Mammary epithelial cell (primary cell): ENCODE measurements at regions of chr14 and their contacts with region 1.

Region 1: DNA sequence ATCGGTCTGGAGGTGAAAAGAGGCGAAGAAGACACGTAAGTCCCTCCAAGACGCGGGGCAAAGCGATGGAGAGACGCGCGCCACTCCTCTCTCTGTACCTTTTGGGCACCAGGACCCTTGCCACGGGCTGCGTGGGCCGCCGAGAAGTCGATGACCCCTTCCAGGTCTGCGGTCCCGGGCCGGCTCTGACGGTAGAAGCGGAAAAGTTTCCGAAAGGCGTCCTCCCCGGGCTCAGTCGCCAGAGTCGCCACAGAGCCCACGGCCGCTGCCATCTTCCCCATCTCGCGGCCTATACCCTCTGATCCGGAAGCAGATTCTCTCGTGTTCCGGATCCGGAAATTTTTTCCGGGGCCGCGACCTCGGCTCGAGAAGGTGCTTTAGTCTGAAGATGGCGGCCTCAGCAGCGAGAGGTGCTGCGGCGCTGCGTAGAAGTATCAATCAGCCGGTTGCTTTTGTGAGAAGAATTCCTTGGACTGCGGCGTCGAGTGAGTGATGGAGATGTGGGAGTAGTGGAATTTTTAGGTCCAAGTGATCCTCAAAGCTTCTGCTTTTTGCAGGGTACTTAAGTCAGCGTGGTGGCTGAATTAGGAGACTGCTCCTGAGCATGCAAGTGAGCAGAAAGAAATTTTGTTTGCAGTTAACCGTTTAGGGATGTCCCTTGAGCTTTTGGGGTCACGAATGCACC is at the starts of genes ALKBH1 and SLIRP:
- DNase-seq: peak; percentile 82
- H3K4me3 ChIP-seq: peak within 1 kb of the TSS; percentile 77 to 99 (median 92)
- H3K27ac ChIP-seq: peak within 1 kb of the TSS; percentile 64
- H3K4me1 ChIP-seq: peaks cover 14% of the 10 kb centered on the region
- H3K27me3 ChIP-seq: no peaks in the 10 kb centered on the region
- CTCF ChIP-seq: no peak
- total RNA-seq, gene ALKBH1: 8.0 to 14.7 TPM
- total RNA-seq, gene SLIRP: 51.7 to 161 TPM

Region 2: GRCh38 chr14:77554207-77554606 is 153.7 kb before region 1 on chr14:
- CTCF ChIA-PET with region 1: interaction called, 4 read pairs
- dilution Hi-C with region 1: no loop called
- in situ Hi-C with region 1: no loop called
- intact Hi-C with region 1: loop called (anchors 5 kb)
- DNase-seq: no peak
- H3K4me3 ChIP-seq: no peak overlapping the region
- H3K27ac ChIP-seq: no peak overlapping the region
- H3K4me1 ChIP-seq: no peaks in the 10 kb centered on the region
- H3K27me3 ChIP-seq: no peaks in the 10 kb centered on the region
- CTCF ChIP-seq: no peak

Region 3: DNA sequence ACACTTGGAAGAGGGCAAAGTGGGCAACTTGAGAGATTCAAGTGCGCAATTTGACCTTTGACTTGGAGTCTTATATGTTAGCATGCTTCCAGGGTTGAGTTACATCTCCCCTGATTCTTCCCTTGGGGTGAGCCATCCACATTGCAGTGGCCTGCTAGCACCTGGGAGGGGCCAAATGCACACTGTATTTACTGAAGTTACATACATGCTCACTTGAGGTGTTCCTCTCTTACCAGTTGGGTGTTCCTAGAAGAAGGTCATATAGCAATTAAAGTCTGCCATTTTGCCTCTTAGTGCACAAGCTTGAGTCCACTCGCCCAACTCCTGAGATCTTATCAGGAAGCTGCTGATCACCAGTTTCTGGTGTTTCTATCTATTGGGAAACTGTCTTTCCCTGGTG is 77.8 kb before region 1 on chr14:
- CTCF ChIA-PET with region 1: no interaction called
- dilution Hi-C with region 1: no loop called
- in situ Hi-C with region 1: no loop called
- intact Hi-C with region 1: no loop called
- DNase-seq: no peak
- H3K4me3 ChIP-seq: no peak overlapping the region
- H3K27ac ChIP-seq: no peak overlapping the region
- H3K4me1 ChIP-seq: no peaks in the 10 kb centered on the region
- H3K27me3 ChIP-seq: no peaks in the 10 kb centered on the region
- CTCF ChIP-seq: no peak

Region 4: DNA sequence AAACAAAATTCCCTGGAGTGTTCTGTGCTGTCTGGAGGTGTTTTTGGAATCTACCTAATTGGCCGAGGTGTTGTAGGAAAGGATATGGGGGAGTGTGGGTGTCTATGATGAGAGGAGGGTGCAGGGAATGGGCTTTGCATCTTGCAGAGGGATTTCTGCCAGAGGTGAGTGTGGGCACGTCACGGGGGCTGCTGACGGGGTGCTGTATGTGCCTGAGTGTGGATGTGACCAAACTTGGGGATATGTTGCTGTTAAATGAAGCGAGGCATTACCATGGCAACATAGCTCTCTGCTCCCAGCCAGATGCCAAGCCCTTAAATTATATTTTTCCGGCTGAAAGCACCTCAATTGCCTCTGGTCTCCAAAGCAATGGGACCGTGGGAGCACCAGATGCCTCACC is 47.1 kb before region 1 on chr14:
- CTCF ChIA-PET with region 1: no interaction called
- dilution Hi-C with region 1: loop called (anchors 5 kb)
- in situ Hi-C with region 1: no loop called
- intact Hi-C with region 1: loop called (anchors 1 kb)
- DNase-seq: no peak
- H3K4me3 ChIP-seq: no peak overlapping the region
- H3K27ac ChIP-seq: no peak overlapping the region
- H3K4me1 ChIP-seq: peaks cover 14% of the 10 kb centered on the region
- H3K27me3 ChIP-seq: no peaks in the 10 kb centered on the region
- CTCF ChIP-seq: no peak

Region 5: DNA sequence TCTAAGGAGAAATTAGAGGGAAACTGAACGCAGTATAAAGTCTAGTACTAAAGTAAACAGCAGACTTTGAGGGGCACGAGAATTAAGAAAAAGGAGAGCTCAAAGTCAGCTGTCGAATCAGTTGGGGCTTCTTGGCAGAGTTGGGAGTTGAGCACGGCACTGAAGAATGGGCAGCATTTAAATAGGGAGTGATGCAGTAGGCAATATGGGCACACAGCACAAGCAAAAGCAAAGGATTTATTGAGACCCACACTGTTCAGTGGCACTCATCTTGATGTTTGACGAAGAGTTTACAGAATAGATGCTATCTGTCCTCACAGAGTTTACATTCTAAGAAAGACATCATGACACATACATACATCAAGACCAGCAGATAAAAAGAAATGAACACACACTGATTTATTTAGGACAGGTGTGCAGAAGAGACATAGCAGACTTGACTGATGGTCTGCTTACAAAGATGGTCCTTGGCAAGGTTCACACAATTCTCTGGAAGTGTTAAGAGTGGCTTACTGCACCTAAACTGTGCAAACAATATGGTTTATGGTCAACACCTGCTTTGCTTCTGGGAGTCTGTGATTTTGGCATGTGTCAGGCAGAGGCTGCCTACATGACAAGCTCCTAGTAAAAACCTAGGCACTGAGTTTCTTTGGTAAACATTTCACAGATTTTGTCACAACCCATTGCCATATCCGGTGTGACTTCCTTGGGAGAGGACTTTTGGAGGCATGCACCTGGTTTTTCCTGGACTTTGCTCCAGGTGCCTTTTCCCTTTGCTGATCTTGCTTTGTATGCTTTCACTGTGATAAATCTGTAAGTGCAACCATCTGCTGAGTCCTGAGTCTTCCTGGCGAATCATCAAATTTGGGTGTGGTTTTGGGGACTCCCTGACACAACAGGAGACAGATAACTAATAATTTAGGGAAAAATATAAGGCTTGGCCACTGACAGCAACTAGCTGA is 26.4 kb before region 1 on chr14:
- CTCF ChIA-PET with region 1: interaction called, 5 read pairs
- dilution Hi-C with region 1: no loop called
- in situ Hi-C with region 1: no loop called
- intact Hi-C with region 1: loop called (anchors 2 kb)
- DNase-seq: peak; percentile 60
- H3K4me3 ChIP-seq: no peak overlapping the region
- H3K27ac ChIP-seq: no peak overlapping the region
- H3K4me1 ChIP-seq: peaks cover 8% of the 10 kb centered on the region
- H3K27me3 ChIP-seq: no peaks in the 10 kb centered on the region
- CTCF ChIP-seq: no peak